ENCODE measurements at regions of chr14 and their contacts with region 1.

Region 1: GRCh38 chr14:21383848-21384493 is at the start of gene SUPT16H:
- DNase-seq: peak; percentile 84 to 97 (median 91)
- ATAC-seq: peak; percentile 91
- H3K4me3 ChIP-seq: peak within 1 kb of the TSS; percentile 82
- H3K4me3 Mint-ChIP-seq: peak within 1 kb of the TSS; percentile 98
- H3K27ac ChIP-seq: peak within 1 kb of the TSS; percentile 83 to 92
- H3K27ac Mint-ChIP-seq: peak within 1 kb of the TSS; percentile 99
- H3K4me1 ChIP-seq: peaks cover 18% of the 10 kb centered on the region
- H3K4me1 Mint-ChIP-seq: peaks cover 47% of the 10 kb centered on the region
- H3K27me3 ChIP-seq: no peaks in the 10 kb centered on the region
- H3K27me3 Mint-ChIP-seq: no peaks in the 10 kb centered on the region
- CTCF ChIP-seq: no peak
- total RNA-seq, gene SUPT16H: 47.8 to 50.8 TPM

Region 2: DNA sequence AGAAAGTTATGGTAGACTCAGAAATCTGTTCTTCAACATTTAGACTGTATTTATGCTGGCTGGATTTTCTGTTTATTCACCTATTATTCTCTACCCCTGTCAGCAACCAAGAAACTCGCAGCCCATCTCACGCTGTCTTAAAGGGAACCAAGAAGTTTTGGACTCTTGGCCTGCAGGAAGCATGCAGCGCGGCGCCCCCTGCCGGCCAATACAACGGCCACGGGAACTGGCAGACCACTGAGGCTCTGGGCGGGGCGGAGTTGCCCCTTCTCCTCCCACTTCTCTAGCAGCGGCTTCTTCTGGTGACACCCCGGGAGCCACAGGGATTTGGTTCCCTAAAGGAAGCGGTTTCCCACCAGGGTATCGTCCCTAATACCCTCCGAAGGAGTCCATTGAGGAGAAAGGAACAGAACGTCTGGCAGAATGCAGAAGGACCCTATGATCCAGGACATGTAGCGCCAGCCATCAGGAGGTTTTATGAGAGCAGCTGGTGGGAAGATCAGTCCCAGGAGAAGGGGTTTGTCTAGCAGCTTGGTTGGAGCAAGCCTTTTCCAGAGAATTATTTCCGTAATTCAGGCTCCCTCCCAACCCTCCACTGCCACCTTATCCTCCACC is 449.7 kb before region 1 on chr14:
- CTCF ChIA-PET with region 1: no interaction called
- POLR2A ChIA-PET with region 1: no interaction called
- intact Hi-C with region 1: no loop called
- DNase-seq: peak in 7 of 14 experiments; percentile 2 to 38 (median 12)
- ATAC-seq: no peak
- H3K4me3 ChIP-seq: no peak overlapping the region
- H3K4me3 Mint-ChIP-seq: no peak overlapping the region
- H3K27ac ChIP-seq: no peak overlapping the region
- H3K27ac Mint-ChIP-seq: no peak overlapping the region
- H3K4me1 ChIP-seq: no peaks in the 10 kb centered on the region
- H3K4me1 Mint-ChIP-seq: no peaks in the 10 kb centered on the region
- H3K27me3 ChIP-seq: no peaks in the 10 kb centered on the region
- H3K27me3 Mint-ChIP-seq: peaks cover 4% of the 10 kb centered on the region
- CTCF ChIP-seq: no peak

Region 3: GRCh38 chr14:21395444-21395843 is 11.5 kb after region 1 on chr14:
- CTCF ChIA-PET with region 1: no interaction called
- POLR2A ChIA-PET with region 1: interaction called, 13 read pairs
- intact Hi-C with region 1: no loop called
- DNase-seq: no peak
- ATAC-seq: no peak
- H3K4me3 ChIP-seq: no peak overlapping the region
- H3K4me3 Mint-ChIP-seq: no peak overlapping the region
- H3K27ac ChIP-seq: no peak overlapping the region
- H3K27ac Mint-ChIP-seq: no peak overlapping the region
- H3K4me1 ChIP-seq: no peaks in the 10 kb centered on the region
- H3K4me1 Mint-ChIP-seq: no peaks in the 10 kb centered on the region
- H3K27me3 ChIP-seq: no peaks in the 10 kb centered on the region
- H3K27me3 Mint-ChIP-seq: no peaks in the 10 kb centered on the region
- CTCF ChIP-seq: no peak

Measured in CD4-positive, alpha-beta T cell (primary cell).